Naive thymus-derived CD4-positive, alpha-beta T cell (primary cell): ENCODE measurements at regions of chr4 and their contacts with region 1.

Region 1: DNA sequence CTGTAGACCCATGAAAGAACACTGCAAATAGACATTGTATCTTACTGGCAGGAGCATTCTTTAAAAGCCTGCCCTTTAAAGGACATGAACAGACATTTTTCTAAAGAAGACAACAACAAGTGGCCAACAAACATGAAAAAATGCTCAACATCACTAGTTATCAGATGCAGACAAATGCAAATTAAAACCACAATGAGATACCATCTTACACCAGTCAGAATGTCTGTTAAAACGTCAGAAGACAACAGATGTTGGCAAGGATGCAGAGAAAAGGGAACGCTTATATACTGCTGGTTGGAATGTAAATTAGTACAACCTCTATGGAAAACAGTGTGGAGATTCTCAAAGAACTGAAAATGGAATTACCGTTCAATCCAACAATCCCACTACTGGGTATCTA is 77.2 kb downstream of the ATP10D start:
- DNase-seq: no peak
- ATAC-seq: peak; percentile 45
- H3K4me3 ChIP-seq: no peak overlapping the region
- H3K4me3 Mint-ChIP-seq: no peak overlapping the region
- H3K27ac ChIP-seq: no peak overlapping the region
- H3K27ac Mint-ChIP-seq: no peak overlapping the region
- H3K4me1 ChIP-seq: peaks cover 0 to 6% of the 10 kb centered on the region in 2 donors
- H3K4me1 Mint-ChIP-seq: peaks cover 0 to 11% (median 5%) of the 10 kb centered on the region in 7 donors
- H3K27me3 ChIP-seq: no peaks in the 10 kb centered on the region
- H3K27me3 Mint-ChIP-seq: no peaks in the 10 kb centered on the region

Region 2: GRCh38 chr4:46254788-46255187 is 1307.5 kb before region 1 on chr4:
- CTCF ChIA-PET with region 1: no interaction called
- POLR2A ChIA-PET with region 1: no interaction called
- intact Hi-C with region 1: no loop called
- DNase-seq: no peak
- ATAC-seq: no peak
- H3K4me3 ChIP-seq: no peak overlapping the region
- H3K4me3 Mint-ChIP-seq: no peak overlapping the region
- H3K27ac ChIP-seq: no peak overlapping the region
- H3K27ac Mint-ChIP-seq: no peak overlapping the region
- H3K4me1 ChIP-seq: no peaks in the 10 kb centered on the region
- H3K4me1 Mint-ChIP-seq: no peaks in the 10 kb centered on the region
- H3K27me3 ChIP-seq: no peaks in the 10 kb centered on the region
- H3K27me3 Mint-ChIP-seq: no peaks in the 10 kb centered on the region

Region 3: DNA sequence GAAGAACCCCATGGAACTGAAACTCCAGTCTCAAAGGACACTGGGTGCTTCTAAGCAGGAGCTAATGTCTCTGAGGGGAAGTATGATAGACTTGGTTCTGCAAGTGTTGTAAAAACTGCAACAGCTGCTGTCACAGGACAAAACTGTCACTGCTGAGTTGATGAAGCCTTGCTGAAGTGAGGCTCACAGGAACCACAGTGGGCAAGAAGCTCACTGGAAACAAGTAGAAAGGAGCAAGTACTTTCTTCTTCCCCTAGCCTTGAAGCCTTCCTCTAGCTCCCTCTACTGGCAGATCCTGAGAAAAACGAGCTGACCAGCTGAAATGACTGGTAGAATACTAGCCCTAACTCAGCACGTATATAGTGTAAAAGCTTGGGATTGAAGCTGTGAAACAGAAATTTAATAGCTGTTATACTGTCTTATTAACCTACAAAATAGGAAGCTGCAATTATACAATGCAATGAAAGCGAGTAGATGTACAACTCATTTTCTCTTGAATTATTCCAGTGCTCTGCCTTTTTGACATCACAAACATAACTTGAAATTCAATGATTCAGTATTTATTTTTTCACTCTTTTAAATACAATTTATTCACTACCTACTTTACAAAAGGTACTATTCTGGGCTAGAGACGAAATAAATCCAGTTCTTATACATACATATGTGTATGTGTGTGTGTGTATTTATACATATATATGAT is 439.6 kb before region 1 on chr4:
- CTCF ChIA-PET with region 1: no interaction called
- POLR2A ChIA-PET with region 1: no interaction called
- intact Hi-C with region 1: loop called in 1 of 2 experiments (anchors 10 kb)
- DNase-seq: peak in 5 of 9 donors; percentile 14 to 42 (median 24)
- ATAC-seq: peak; percentile 67
- H3K4me3 ChIP-seq: no peak overlapping the region
- H3K4me3 Mint-ChIP-seq: no peak overlapping the region
- H3K27ac ChIP-seq: no peak overlapping the region
- H3K27ac Mint-ChIP-seq: no peak overlapping the region
- H3K4me1 ChIP-seq: no peaks in the 10 kb centered on the region
- H3K4me1 Mint-ChIP-seq: no peaks in the 10 kb centered on the region
- H3K27me3 ChIP-seq: peaks cover 0 to 2% of the 10 kb centered on the region in 2 donors
- H3K27me3 Mint-ChIP-seq: peaks cover 0 to 18% (median 10%) of the 10 kb centered on the region in 5 donors

Region 4: GRCh38 chr4:47463235-47463956 is 98.9 kb before region 1 on chr4 and contains the start of gene COMMD8:
- CTCF ChIA-PET with region 1: interaction called, 3 read pairs
- POLR2A ChIA-PET with region 1: no interaction called
- intact Hi-C with region 1: loop called (anchors 1 kb)
- DNase-seq: peak; percentile 91 to 97 (median 95)
- ATAC-seq: peak; percentile 93
- H3K4me3 ChIP-seq: peak within 1 kb of the TSS; percentile 82
- H3K4me3 Mint-ChIP-seq: peak within 1 kb of the TSS; percentile 77 to 93 (median 90)
- H3K27ac ChIP-seq: peak within 1 kb of the TSS; percentile 74
- H3K27ac Mint-ChIP-seq: peak within 1 kb of the TSS; percentile 76 to 97 (median 95)
- H3K4me1 ChIP-seq: peaks cover 9 to 17% of the 10 kb centered on the region in 2 donors
- H3K4me1 Mint-ChIP-seq: peaks cover 20 to 48% (median 38%) of the 10 kb centered on the region in 7 donors
- H3K27me3 ChIP-seq: no peaks in the 10 kb centered on the region
- H3K27me3 Mint-ChIP-seq: no peaks in the 10 kb centered on the region
- total RNA-seq, gene COMMD8: 8.4 to 19.3 (median 16.7) TPM

Region 5: DNA sequence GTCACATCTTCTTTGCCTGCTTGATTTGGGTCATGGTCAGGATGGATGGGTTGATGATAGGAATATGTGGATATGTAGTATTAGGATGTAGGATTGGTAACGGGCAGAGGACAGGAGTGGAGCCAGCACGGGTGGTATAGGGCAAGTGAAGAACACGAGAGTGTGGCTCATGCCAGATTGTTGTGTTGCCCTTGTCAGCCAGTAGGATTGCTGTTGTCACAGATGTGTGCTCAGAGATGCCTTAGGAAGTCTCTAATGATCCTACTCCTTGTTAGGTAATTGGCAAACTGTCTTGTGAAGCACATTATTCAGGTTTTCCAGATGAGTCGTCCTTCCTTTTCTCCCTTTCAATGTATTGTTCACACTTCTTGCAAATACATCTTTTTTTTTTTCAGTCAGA is 71.7 kb before region 1 on chr4:
- CTCF ChIA-PET with region 1: interaction called, 3 read pairs
- POLR2A ChIA-PET with region 1: no interaction called
- intact Hi-C with region 1: loop called (anchors 1 to 2 kb)
- DNase-seq: peak in 2 of 9 donors; percentile 9 to 13
- ATAC-seq: peak; percentile 80
- H3K4me3 ChIP-seq: no peak overlapping the region
- H3K4me3 Mint-ChIP-seq: no peak overlapping the region
- H3K27ac ChIP-seq: no peak overlapping the region
- H3K27ac Mint-ChIP-seq: no peak overlapping the region
- H3K4me1 ChIP-seq: peaks cover 0 to 9% of the 10 kb centered on the region in 2 donors
- H3K4me1 Mint-ChIP-seq: peaks cover 7 to 14% (median 9%) of the 10 kb centered on the region in 7 donors
- H3K27me3 ChIP-seq: no peaks in the 10 kb centered on the region
- H3K27me3 Mint-ChIP-seq: no peaks in the 10 kb centered on the region

Region 6: GRCh38 chr4:47531241-47531953 is 30.9 kb before region 1 on chr4:
- CTCF ChIA-PET with region 1: no interaction called
- POLR2A ChIA-PET with region 1: no interaction called
- intact Hi-C with region 1: loop called in 1 of 2 experiments (anchors 2 kb)
- DNase-seq: peak; percentile 7 to 60 (median 42)
- ATAC-seq: peak; percentile 97
- H3K4me3 ChIP-seq: peak overlapping the region; percentile 40
- H3K4me3 Mint-ChIP-seq: peak overlapping the region; percentile 37 to 76 (median 68)
- H3K27ac ChIP-seq: no peak overlapping the region
- H3K27ac Mint-ChIP-seq: peak overlapping the region in 7 of 9 donors; percentile 3 to 76 (median 57)
- H3K4me1 ChIP-seq: peaks cover 25 to 42% of the 10 kb centered on the region in 2 donors
- H3K4me1 Mint-ChIP-seq: peaks cover 32 to 54% (median 44%) of the 10 kb centered on the region in 7 donors
- H3K27me3 ChIP-seq: no peaks in the 10 kb centered on the region
- H3K27me3 Mint-ChIP-seq: no peaks in the 10 kb centered on the region